ENCODE measurements at regions of chr5 and their contacts with region 1.

Region 1: DNA sequence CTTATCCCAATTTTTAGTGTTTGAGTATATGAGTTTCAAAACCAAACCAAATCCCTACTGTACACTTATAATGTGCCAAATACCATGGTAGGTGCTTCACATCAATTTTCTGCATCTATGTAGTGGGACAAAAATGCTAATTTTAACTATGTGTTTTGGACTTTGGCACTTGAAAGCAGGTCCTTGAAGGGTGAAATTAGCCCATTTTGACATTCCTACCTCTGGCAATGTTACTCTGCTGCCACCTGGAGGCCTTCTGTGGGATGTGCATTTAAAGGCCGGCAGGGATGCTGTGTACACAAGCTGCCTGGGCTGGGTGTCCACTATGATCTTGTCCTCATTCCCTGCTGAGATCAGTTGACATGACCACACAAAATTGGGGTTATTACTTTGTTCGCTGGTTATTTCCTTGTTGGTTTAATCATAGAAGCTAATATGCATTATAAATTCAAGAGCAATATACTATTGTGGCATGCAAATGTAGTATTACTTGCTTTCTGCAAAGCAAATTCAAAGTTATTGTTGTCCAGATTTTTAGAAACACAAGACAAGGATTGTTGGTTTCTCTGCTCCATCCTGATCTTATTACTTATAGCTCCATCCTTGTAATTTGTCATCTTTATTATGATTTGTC is 166.8 kb downstream of the ARHGEF28 start:
- DNase-seq: peak in 2 of 3 donors; percentile 75 to 85
- ATAC-seq: peak; percentile 95
- H3K4me3 ChIP-seq: no peak overlapping the region
- H3K4me1 ChIP-seq: no peaks in the 10 kb centered on the region
- CTCF ChIP-seq: peak; percentile 82

Region 2: GRCh38 chr5:73591102-73591695 is 201.6 kb before region 1 on chr5:
- intact Hi-C with region 1: loop called (anchors 5 kb)
- DNase-seq: peak in 1 of 3 donors; percentile 89
- ATAC-seq: peak; percentile 82
- H3K4me3 ChIP-seq: no peak overlapping the region
- H3K4me1 ChIP-seq: no peaks in the 10 kb centered on the region
- CTCF ChIP-seq: peak; percentile 62

Region 3: DNA sequence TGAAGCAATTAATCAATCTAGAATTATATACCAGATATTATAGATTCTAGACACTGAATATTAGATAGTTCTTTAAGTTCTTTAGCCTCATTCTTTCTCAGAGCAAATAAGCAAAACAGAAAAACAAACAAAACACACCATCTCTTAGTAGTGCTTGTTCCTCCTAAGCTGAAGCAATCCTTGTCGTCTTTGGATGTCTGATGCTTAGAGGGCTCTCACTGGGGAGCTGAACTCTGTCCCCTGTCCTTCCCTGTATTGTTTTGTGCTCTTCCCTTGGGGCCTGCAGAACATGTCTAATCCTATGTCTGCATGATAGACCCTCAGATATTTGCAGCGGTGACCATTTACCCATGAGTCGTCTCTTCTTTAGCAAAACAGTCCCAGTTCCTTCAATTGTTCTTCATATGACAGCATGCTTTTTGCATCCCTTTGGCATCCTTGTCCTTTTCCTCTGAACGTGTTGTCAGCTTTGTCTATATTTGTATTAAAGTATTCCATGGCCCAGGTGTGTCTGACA is 52.5 kb before region 1 on chr5:
- intact Hi-C with region 1: no loop called
- DNase-seq: no peak
- ATAC-seq: no peak
- H3K4me3 ChIP-seq: no peak overlapping the region
- H3K4me1 ChIP-seq: no peaks in the 10 kb centered on the region
- CTCF ChIP-seq: no peak

Measured in mucosa of descending colon (tissue), 3 donors.